ENCODE measurements at regions of chr12 and their contacts with region 1.

Region 1: GRCh38 chr12:11486623-11487444 is 91.5 kb upstream of the PRB2 start:
- DNase-seq: peak; percentile 76 to 83
- H3K4me3 ChIP-seq: no peak overlapping the region
- H3K4me1 ChIP-seq: no peaks in the 10 kb centered on the region
- H3K27me3 ChIP-seq: peaks cover 8% of the 10 kb centered on the region

Region 2: GRCh38 chr12:10771132-10771733 is 715.6 kb before region 1 on chr12:
- in situ Hi-C with region 1: loop called (anchors 10 kb)
- DNase-seq: peak in 1 of 2 experiments; percentile 20
- H3K4me3 ChIP-seq: no peak overlapping the region
- H3K4me1 ChIP-seq: no peaks in the 10 kb centered on the region
- H3K27me3 ChIP-seq: peaks cover 49% of the 10 kb centered on the region

Region 3: GRCh38 chr12:11228296-11228879 is 258.4 kb before region 1 on chr12:
- in situ Hi-C with region 1: loop called (anchors 10 kb)
- DNase-seq: peak; percentile 60 to 71
- H3K4me3 ChIP-seq: no peak overlapping the region
- H3K4me1 ChIP-seq: no peaks in the 10 kb centered on the region
- H3K27me3 ChIP-seq: no peaks in the 10 kb centered on the region

Region 4: DNA sequence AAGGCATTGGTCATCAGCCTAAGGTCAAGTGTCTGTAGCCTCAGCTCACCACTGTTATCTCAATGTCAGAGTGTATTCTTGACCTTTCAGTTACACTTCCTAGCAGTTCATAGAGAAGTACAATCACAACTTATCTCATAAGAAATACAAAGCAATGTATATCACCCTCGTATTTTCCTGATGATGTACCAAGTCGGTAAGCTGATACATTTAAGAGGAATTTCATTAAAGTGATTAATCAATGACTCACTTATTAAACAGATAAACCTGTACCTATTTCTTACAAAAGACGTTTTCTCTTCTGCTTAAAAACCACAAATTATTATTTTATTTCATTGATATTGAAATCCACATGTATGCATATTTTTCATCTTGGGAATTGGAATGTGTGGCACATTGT is 213.4 kb before region 1 on chr12:
- in situ Hi-C with region 1: no loop called
- DNase-seq: no peak
- H3K4me3 ChIP-seq: no peak overlapping the region
- H3K4me1 ChIP-seq: no peaks in the 10 kb centered on the region
- H3K27me3 ChIP-seq: no peaks in the 10 kb centered on the region

Region 5: DNA sequence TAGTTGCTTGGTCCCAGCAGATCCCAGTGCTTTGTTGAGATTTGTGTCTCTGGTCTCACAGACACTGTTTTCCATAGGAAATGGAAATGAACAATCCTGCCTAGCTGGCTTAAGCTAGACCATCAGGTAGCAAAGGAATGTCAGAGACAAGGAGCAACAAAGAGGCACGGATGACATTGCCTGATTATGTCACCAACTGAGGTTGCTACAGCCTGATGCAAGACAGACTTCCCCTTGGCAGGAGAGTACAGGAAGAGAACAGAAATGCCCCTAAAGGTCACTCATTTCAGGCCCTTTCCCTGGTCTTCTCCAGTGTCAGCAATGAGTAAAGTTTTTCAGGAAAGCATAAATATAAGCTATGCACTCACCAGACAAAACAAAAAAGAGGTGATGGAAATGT is 89.5 kb before region 1 on chr12:
- in situ Hi-C with region 1: no loop called
- DNase-seq: no peak
- H3K4me3 ChIP-seq: no peak overlapping the region
- H3K4me1 ChIP-seq: no peaks in the 10 kb centered on the region
- H3K27me3 ChIP-seq: peaks cover 2% of the 10 kb centered on the region; the same call in 1 of the 2 replicates

Region 6: GRCh38 chr12:11862798-11863197 is 376.0 kb after region 1 on chr12:
- in situ Hi-C with region 1: no loop called
- DNase-seq: no peak
- H3K4me3 ChIP-seq: no peak overlapping the region
- H3K4me1 ChIP-seq: no peaks in the 10 kb centered on the region; the same call in 1 of the 2 replicates
- H3K27me3 ChIP-seq: no peaks in the 10 kb centered on the region

Measured in HAP-1 (cell line).